ENCODE measurements at regions of chrX and their contacts with region 1.

Region 1: DNA sequence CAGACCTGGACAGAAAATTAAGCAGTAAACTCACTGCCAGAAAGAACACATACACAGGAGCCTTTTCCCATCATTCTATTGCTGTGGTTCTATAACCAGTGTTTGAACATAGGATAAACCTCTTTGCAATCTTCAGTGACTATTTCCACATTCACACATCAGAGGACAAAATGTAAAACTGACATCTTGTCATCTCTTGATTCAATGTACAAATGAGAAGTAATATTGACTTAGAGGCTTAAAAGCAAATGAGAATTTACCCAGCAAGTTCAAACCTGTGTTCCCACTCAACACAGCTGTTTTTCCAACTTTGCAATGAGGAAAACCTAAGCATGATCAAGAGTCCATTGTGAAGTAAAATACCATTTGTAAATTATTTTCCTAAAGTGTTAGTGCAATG is 307.1 kb upstream of the CPXCR1 start:
- DNase-seq: no peak
- ATAC-seq: no peak
- H3K4me3 ChIP-seq: no peak overlapping the region
- H3K27ac ChIP-seq: no peak overlapping the region
- H3K4me1 ChIP-seq: no peaks in the 10 kb centered on the region
- H3K27me3 ChIP-seq: no peaks in the 10 kb centered on the region
- CTCF ChIP-seq: no peak
- POLR2A ChIP-seq: no peak

Region 2: DNA sequence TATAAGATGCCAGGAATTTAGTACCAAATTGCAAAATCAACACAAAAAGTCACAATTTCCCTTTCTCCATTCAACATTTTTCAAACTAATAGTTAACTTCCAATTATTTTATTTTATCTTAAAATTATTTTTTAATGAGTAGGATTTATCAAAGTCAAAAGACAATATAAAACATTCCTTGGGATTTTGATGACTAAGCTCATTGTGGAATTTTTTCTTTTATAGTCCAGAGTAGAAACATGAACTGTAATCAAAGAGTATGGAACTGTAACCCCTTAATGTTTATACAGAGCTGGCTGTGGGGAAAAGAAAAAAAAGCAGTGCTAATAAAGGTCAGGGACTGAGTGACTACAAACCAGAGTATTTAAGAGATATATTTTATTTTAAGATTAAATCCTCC is 61.5 kb before region 1 on chrX:
- intact Hi-C with region 1: loop called in 1 of 10 experiments (anchors 10 kb)
- DNase-seq: no peak
- ATAC-seq: no peak
- H3K4me3 ChIP-seq: no peak overlapping the region
- H3K27ac ChIP-seq: no peak overlapping the region
- H3K4me1 ChIP-seq: no peaks in the 10 kb centered on the region
- H3K27me3 ChIP-seq: no peaks in the 10 kb centered on the region
- CTCF ChIP-seq: no peak
- POLR2A ChIP-seq: no peak